CD4-positive, alpha-beta memory T cell (primary cell): ENCODE measurements at regions of chr10 and their contacts with region 1.

Region 1: GRCh38 chr10:50417886-50418830 is 166.8 kb upstream of the ASAH2 start:
- DNase-seq: peak; percentile 38 to 50 (median 39)
- H3K4me3 ChIP-seq: peak overlapping the region; percentile 58 to 62
- H3K4me3 Mint-ChIP-seq: peak overlapping the region; percentile 91 to 95 (median 94)
- H3K27ac ChIP-seq: peak overlapping the region; percentile 6
- H3K27ac Mint-ChIP-seq: peak overlapping the region; percentile 67 to 90 (median 70)
- H3K4me1 ChIP-seq: peaks cover 33% of the 10 kb centered on the region
- H3K4me1 Mint-ChIP-seq: peaks cover 26 to 47% (median 41%) of the 10 kb centered on the region in 4 donors
- H3K27me3 ChIP-seq: no peaks in the 10 kb centered on the region
- H3K27me3 Mint-ChIP-seq: no peaks in the 10 kb centered on the region

Region 2: DNA sequence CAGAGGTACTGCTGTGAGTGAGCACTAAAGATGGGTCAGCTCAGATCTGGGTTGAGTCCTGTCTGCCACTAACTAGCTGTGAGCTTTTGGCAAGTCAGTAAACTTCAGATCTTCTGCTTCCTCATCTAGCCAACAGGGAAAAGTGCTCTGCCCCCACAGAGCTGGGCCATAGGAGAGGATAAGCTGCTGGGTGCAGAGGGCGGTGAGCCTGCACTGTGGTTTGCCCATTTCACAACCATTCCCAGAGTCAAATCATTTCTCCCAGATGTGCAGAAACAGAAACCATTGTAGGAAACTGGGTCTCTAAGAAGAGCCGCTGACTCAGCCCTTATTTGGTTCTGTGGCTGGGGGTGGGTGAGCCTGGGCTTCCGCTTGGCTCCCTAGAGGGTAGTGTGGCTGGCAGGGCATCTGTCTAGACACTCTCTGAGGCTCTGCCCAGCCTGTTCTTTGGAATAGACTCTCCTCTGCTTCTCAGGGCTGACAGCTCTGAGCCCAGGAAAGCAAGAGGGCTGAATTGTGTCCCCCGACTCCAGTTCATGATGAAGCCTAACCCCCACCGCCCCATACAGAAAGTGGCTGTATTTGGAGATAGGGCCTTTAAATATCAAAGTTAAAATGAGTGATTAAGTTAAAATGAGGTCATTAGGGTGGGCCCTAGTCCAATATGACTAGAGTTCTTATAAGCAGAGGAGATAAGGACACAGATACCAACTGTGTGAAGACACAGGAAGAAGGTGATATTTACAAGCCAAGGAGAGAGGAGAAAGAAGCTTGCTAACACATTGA is 1783.8 kb before region 1 on chr10:
- CTCF ChIA-PET with region 1: no interaction called
- POLR2A ChIA-PET with region 1: no interaction called
- intact Hi-C with region 1: no loop called
- DNase-seq: no peak
- H3K4me3 ChIP-seq: no peak overlapping the region
- H3K4me3 Mint-ChIP-seq: peak overlapping the region in 7 of 8 donors; percentile 11 to 63 (median 46)
- H3K27ac ChIP-seq: no peak overlapping the region
- H3K27ac Mint-ChIP-seq: peak overlapping the region in 5 of 7 donors; percentile 32 to 77 (median 53)
- H3K4me1 ChIP-seq: peaks cover 13% of the 10 kb centered on the region
- H3K4me1 Mint-ChIP-seq: peaks cover 2 to 18% (median 13%) of the 10 kb centered on the region in 4 donors
- H3K27me3 ChIP-seq: no peaks in the 10 kb centered on the region
- H3K27me3 Mint-ChIP-seq: peaks cover 13 to 17% of the 10 kb centered on the region in 2 donors

Region 3: GRCh38 chr10:50367732-50368131 is 50.4 kb before region 1 on chr10:
- CTCF ChIA-PET with region 1: interaction called, 13 read pairs
- POLR2A ChIA-PET with region 1: no interaction called
- intact Hi-C with region 1: loop called (anchors 5 kb)
- DNase-seq: peak in 1 of 5 donors; percentile 3
- H3K4me3 ChIP-seq: no peak overlapping the region
- H3K4me3 Mint-ChIP-seq: no peak overlapping the region
- H3K27ac ChIP-seq: no peak overlapping the region
- H3K27ac Mint-ChIP-seq: no peak overlapping the region
- H3K4me1 ChIP-seq: peaks cover 4% of the 10 kb centered on the region
- H3K4me1 Mint-ChIP-seq: peaks cover 11 to 20% (median 13%) of the 10 kb centered on the region in 4 donors
- H3K27me3 ChIP-seq: no peaks in the 10 kb centered on the region
- H3K27me3 Mint-ChIP-seq: no peaks in the 10 kb centered on the region

Region 4: GRCh38 chr10:50373821-50374501 is 44.2 kb before region 1 on chr10:
- CTCF ChIA-PET with region 1: interaction called, 13 read pairs
- POLR2A ChIA-PET with region 1: no interaction called
- intact Hi-C with region 1: loop called (anchors 5 kb)
- DNase-seq: no peak
- H3K4me3 ChIP-seq: no peak overlapping the region
- H3K4me3 Mint-ChIP-seq: no peak overlapping the region
- H3K27ac ChIP-seq: no peak overlapping the region
- H3K27ac Mint-ChIP-seq: no peak overlapping the region
- H3K4me1 ChIP-seq: peaks cover 23% of the 10 kb centered on the region
- H3K4me1 Mint-ChIP-seq: peaks cover 0 to 20% (median 13%) of the 10 kb centered on the region in 4 donors
- H3K27me3 ChIP-seq: no peaks in the 10 kb centered on the region
- H3K27me3 Mint-ChIP-seq: no peaks in the 10 kb centered on the region

Region 5: DNA sequence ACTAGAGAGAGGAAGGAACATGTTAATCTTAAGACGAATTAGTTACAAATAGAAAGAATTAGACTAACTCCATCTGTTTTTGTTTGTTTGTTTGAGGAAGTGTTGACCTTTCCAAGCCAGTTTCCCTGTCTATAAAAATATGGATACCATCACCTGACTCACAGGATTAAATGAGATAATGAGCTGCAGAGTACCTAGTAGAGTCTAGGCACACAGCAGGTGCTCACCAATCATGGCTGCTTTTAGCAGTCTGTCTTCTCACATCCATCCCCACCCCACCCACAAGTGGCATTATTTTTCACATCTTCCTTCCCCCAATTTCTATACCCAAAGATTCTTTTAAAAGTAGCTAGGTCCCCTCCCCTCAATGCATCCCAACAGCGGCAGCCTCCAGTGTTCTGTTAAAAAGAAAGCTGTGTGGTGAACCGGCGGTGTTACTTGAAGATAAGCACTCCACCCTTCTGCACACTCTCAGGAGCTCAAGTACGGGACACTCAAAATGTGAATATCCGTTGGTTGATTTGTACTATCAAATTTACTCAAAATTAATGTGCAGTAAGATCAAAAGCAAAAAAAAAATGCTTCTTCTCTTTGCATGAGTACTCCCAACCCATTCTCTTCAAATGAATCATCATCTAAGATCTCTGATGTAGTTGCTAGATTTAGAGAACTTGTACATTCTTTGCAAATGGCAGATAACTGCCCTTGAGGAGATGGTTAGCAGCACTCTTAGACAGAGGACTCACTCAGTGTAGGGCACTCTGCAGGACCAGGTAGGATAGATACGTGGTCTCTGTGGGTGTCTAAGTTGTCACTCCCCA is 21.5 kb before region 1 on chr10:
- CTCF ChIA-PET with region 1: interaction called, 14 read pairs
- POLR2A ChIA-PET with region 1: interaction called, 17 read pairs
- intact Hi-C with region 1: no loop called
- DNase-seq: no peak
- H3K4me3 ChIP-seq: peak overlapping the region in 1 of 2 donors; percentile 14
- H3K4me3 Mint-ChIP-seq: peak overlapping the region; percentile 39 to 70 (median 53)
- H3K27ac ChIP-seq: no peak overlapping the region
- H3K27ac Mint-ChIP-seq: peak overlapping the region in 6 of 7 donors; percentile 11 to 70 (median 54)
- H3K4me1 ChIP-seq: peaks cover 40% of the 10 kb centered on the region
- H3K4me1 Mint-ChIP-seq: peaks cover 33 to 69% (median 52%) of the 10 kb centered on the region in 4 donors
- H3K27me3 ChIP-seq: no peaks in the 10 kb centered on the region
- H3K27me3 Mint-ChIP-seq: no peaks in the 10 kb centered on the region